ENCODE measurements at regions of chr18 and their contacts with region 1.

Region 1: DNA sequence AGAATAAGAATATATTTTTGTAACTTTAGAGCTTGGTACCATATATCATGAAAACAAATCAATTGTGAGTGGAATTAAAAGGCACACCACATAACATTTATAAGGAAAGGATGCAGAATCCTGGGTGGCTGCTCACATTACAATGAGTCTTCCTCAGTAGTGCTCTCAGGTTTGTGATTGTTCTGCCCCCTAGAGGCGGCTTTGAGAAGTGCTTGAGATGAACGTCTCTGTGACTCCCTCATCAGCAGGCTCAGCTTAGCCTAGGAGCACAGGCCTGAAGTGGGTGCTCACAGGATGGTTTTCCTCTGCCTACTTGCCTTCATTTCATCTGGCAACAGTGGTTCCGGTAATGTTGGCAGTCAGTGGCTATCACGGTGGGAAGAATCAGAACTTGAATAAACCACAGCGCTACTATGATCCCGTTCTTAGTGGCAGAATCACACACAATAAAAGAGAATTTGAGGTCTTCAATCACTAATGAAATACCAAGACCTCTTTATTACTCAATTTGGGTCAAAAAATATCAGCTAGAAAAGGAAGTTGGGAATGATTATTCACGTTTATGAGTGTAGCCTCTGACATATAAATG is 38.1 kb upstream of the B4GALT6 start:
- DNase-seq: peak; percentile 72
- H3K4me3 ChIP-seq: no peak overlapping the region
- H3K27ac ChIP-seq: no peak overlapping the region
- H3K4me1 ChIP-seq: no peaks in the 10 kb centered on the region
- H3K27me3 ChIP-seq: no peaks in the 10 kb centered on the region
- CTCF ChIP-seq: peak; percentile 62 to 76 (median 70)
- POLR2A ChIP-seq: no peak

Region 2: GRCh38 chr18:31555971-31556747 is 166.3 kb before region 1 on chr18:
- intact Hi-C with region 1: loop called (anchors 5 kb)
- DNase-seq: peak; percentile 56
- H3K4me3 ChIP-seq: no peak overlapping the region
- H3K27ac ChIP-seq: no peak overlapping the region
- H3K4me1 ChIP-seq: no peaks in the 10 kb centered on the region
- H3K27me3 ChIP-seq: no peaks in the 10 kb centered on the region
- CTCF ChIP-seq: peak; percentile 51 to 88 (median 86)
- POLR2A ChIP-seq: no peak

Region 3: DNA sequence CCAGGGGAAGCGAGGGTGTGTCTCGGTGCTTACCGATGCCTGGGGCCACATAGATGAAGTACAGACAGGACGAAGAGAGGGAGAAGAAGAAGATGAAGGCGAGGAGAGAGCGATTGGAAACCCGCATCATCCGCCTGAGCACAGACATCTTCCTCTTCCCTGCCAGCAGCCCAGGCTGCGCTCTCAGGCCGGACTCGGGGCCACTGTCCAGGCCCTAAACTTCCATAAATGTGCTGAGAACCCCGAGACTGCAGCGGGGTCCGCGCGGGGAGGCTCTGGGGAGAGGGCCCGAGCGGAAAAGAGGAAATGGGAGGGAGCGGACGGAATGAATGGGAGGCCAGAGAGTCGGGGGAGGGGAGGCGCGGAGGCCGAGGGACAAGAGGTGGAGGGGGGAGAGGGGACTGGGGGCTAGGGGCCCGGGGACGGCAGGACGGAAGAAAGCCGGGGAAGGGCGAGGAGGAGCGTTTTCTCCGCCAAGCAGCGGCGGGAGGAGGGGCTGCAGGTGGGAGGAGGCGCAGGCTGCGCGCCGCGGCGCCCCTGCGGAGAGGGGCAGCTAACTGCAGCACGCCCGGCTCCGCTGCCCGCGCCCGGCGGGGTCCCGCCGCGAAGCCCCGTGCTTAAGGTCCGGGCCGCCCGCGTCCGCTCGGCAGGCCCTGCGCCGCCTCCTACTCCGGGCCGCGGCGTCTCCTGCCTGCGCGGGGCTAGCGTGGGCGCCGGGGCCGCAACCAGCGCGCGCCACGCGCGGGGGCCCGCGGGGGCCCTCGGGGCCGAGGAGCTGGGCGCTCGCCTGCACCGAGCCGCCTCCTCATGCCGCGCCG is 38.0 kb before region 1 on chr18 and contains the start of gene B4GALT6:
- intact Hi-C with region 1: loop called (anchors 5 kb)
- DNase-seq: peak; percentile 12
- H3K4me3 ChIP-seq: peak within 1 kb of the TSS; percentile 57 to 62
- H3K27ac ChIP-seq: peak within 1 kb of the TSS; percentile 80 to 81
- H3K4me1 ChIP-seq: no peaks in the 10 kb centered on the region
- H3K27me3 ChIP-seq: no peaks in the 10 kb centered on the region
- CTCF ChIP-seq: no peak
- POLR2A ChIP-seq: no peak
- total RNA-seq, gene B4GALT6: 3.5 to 9.0 TPM

Region 4: GRCh38 chr18:31774477-31774785 is 52.0 kb after region 1 on chr18:
- intact Hi-C with region 1: no loop called
- DNase-seq: no peak
- H3K4me3 ChIP-seq: no peak overlapping the region
- H3K27ac ChIP-seq: no peak overlapping the region
- H3K4me1 ChIP-seq: no peaks in the 10 kb centered on the region
- H3K27me3 ChIP-seq: no peaks in the 10 kb centered on the region
- CTCF ChIP-seq: no peak
- POLR2A ChIP-seq: no peak

Region 5: GRCh38 chr18:31819106-31819924 is 96.9 kb after region 1 on chr18:
- intact Hi-C with region 1: loop called (anchors 5 kb)
- DNase-seq: peak; percentile 12
- H3K4me3 ChIP-seq: no peak overlapping the region
- H3K27ac ChIP-seq: no peak overlapping the region
- H3K4me1 ChIP-seq: no peaks in the 10 kb centered on the region
- H3K27me3 ChIP-seq: no peaks in the 10 kb centered on the region
- CTCF ChIP-seq: peak; percentile 31 to 78 (median 74)
- POLR2A ChIP-seq: no peak

Measured in prostate gland (tissue), 2 donors.